ENCODE measurements at regions of chr14 and their contacts with region 1.

Region 1: DNA sequence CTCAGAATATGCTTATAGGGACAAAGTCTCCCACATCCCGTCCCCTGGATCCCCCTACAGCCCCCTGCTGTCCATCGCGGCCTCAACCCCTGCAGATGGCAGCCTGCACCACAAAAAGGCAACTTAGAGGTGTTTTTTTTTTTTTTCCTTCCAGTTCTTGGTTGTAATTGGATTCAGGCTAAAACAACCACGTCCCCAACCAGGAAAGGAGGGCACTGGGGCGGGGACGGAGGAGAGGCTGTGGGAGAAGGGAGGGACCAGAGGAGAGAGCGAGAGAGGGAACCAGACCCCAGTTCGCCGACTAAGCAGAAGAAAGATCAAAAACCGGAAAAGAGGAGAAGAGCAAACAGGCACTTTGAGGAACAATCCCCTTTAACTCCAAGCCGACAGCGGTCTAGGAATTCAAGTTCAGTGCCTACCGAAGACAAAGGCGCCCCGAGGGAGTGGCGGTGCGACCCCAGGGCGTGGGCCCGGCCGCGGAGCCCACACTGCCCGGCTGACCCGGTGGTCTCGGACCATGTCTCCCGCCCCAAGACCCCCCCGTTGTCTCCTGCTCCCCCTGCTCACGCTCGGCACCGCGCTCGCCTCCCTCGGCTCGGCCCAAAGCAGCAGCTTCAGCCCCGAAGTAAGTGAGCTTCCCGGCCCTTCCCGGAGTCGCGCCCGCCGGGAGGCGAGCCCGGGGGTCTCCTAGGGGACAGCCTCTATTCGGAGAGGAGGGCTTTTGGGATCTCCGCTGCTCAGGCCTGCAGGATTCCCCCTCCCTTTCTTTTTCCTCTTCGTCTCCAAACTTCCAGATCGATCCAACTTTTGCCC is at the start of gene MMP14:
- DNase-seq: peak; percentile 86
- H3K4me3 ChIP-seq: peak within 1 kb of the TSS; percentile 84 to 94 (median 86)
- H3K27ac ChIP-seq: peak within 1 kb of the TSS; percentile 86
- H3K4me1 ChIP-seq: peaks cover 24% of the 10 kb centered on the region
- H3K27me3 ChIP-seq: no peaks in the 10 kb centered on the region
- CTCF ChIP-seq: peak in 1 of 2 donors; percentile 57
- total RNA-seq, gene MMP14: 525 to 766 TPM

Region 2: DNA sequence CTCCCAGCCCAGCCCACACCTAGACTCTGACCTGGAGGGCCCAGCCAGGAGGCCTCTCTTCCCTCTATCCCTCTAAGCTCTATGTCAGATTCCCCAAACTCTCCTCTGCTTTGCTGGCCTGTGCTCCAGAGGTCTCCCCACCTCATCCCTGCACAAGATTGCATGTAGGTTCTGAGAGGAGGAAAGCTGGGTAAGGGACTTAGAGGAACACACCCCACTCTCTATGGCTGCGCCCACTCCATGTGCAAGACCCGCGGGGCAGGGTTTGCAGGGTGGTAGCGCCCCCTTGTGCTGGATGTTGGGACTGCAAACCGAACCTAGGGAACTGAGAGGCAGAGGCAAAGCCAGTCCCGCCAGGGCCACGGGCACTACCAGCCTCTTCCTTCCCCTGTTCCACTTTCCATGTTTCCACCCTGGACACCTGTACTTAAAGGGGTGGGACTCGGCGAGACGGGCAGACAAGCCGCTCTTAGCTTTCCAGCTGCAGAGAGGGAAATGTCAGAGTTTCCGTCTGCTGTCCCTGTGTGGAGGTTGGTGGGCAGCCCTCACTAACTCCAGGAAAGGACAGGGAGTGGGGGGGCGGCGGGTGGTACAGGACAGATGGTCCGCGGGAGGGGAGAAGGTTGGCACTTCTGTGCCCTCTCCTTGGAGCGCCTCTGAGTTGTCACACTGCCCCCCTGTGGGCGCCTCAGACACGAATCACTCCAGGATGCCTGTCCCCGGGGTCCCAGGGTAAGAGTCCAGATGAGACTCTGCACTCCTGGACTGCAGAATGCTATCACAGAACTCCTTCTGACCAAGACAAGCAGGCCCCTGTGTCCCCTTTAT is 16.6 kb after region 1 on chr14:
- CTCF ChIA-PET with region 1: interaction called, 10 read pairs
- dilution Hi-C with region 1: no loop called
- in situ Hi-C with region 1: no loop called
- intact Hi-C with region 1: loop called (anchors 1 kb)
- DNase-seq: peak; percentile 80
- H3K4me3 ChIP-seq: peak overlapping the region in 2 of 3 experiments; percentile 7 to 52
- H3K27ac ChIP-seq: peak overlapping the region; percentile 90
- H3K4me1 ChIP-seq: peaks cover 54% of the 10 kb centered on the region
- H3K27me3 ChIP-seq: no peaks in the 10 kb centered on the region
- CTCF ChIP-seq: peak; percentile 91 to 93